ENCODE measurements at regions of chr20 and their contacts with region 1.

Region 1: DNA sequence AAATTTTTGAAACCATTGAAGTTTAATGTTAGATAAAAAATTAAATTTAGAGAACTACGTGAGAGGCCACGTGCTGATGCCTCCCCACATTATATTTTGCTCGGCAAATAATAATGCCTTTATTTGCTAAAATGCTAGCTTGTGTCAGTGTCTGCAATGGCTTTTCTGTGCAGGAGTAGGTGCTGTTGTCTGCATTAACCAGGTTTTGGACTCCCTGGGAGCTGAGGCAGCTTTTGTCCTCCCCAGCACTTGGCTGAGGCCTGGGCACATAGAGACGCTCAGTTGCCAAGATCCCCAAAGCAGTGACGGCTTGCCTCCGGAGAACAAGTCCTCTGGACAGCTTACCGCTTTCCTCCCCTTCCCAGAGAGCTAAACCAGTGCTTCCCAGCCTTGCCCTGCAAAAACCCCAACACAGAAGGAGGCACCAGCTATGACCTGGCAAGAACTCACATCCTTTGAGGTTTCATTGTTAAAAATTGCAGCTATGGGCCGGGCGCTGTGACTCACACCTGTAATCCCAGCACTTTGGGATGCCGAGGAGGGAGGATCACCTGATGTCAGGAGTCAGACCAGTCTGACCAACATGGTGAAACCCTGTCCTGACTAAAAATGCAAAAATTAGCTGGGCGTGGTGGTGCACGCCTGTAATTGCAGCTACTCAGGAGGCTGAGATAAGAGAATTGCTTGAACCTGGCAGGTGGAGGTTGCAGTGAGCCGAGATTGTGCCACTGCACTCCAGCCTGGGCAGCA is 59.9 kb downstream of the KAT14 start:
- DNase-seq: no peak
- ATAC-seq: no peak
- H3K4me3 ChIP-seq: no peak overlapping the region
- H3K27ac ChIP-seq: no peak overlapping the region
- H3K4me1 ChIP-seq: no peaks in the 10 kb centered on the region
- H3K27me3 ChIP-seq: no peaks in the 10 kb centered on the region
- CTCF ChIP-seq: no peak
- POLR2A ChIP-seq: no peak

Region 2: GRCh38 chr20:17835240-17835935 is 362.2 kb before region 1 on chr20:
- intact Hi-C with region 1: no loop called
- DNase-seq: peak in 3 of 5 donors; percentile 45 to 76 (median 74)
- ATAC-seq: peak; percentile 44 to 72 (median 64)
- H3K4me3 ChIP-seq: no peak overlapping the region
- H3K27ac ChIP-seq: peak overlapping the region; percentile 36 to 96 (median 81)
- H3K4me1 ChIP-seq: peaks cover 0 to 34% (median 21%) of the 10 kb centered on the region in 12 donors
- H3K27me3 ChIP-seq: no peaks in the 10 kb centered on the region
- CTCF ChIP-seq: no peak
- POLR2A ChIP-seq: no peak

Region 3: DNA sequence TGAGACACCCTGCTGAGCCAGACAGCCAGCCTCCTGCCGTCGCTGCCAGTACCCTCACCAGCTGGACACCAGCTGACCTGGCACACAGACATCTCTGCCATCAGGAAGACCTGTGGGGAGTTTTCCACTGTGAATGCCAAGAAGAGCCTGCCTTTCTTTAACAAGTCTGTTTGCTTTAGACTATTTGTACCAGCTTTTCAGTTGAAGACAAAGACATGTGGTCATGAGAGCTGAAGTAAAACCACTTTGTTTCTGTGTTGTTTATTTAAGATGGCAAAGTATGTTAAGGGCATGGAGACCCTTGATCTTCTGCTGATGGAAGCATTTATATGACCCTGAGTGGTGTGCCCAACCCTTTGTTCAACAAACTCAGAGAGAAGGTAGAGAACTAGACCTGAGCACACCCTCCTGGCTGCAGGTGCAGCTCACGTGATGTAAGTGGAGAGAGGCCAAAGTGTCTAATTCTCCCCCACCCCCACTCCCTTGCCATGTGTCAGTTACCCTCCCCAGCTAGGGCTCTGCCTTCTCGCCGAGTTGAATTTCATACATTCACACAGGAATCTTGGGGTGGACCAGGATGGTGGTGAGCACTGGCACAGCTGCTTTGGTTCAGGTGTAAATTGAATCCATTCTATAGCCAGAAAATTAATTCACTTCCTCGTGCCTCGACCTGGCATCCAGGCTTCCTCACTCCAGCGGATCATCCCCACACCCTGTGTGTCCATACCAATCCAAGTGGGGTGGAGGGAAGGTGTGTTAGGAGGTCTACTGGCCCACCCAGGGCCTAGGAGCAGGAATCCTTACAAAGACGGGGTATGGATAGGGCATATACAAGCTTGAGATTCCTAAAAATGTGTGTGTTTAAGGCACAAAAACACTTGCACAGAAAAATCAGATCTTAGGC is 932.8 kb after region 1 on chr20:
- intact Hi-C with region 1: loop called in 1 of 10 experiments (anchors 10 kb)
- DNase-seq: no peak
- ATAC-seq: peak in 1 of 4 donors; percentile 39
- H3K4me3 ChIP-seq: no peak overlapping the region
- H3K27ac ChIP-seq: peak overlapping the region in 1 of 12 donors; percentile 21
- H3K4me1 ChIP-seq: no peaks in the 10 kb centered on the region
- H3K27me3 ChIP-seq: no peaks in the 10 kb centered on the region
- CTCF ChIP-seq: no peak
- POLR2A ChIP-seq: no peak